BJ (cell line): ENCODE measurements at regions of chr3 and their contacts with region 1.

Region 1: DNA sequence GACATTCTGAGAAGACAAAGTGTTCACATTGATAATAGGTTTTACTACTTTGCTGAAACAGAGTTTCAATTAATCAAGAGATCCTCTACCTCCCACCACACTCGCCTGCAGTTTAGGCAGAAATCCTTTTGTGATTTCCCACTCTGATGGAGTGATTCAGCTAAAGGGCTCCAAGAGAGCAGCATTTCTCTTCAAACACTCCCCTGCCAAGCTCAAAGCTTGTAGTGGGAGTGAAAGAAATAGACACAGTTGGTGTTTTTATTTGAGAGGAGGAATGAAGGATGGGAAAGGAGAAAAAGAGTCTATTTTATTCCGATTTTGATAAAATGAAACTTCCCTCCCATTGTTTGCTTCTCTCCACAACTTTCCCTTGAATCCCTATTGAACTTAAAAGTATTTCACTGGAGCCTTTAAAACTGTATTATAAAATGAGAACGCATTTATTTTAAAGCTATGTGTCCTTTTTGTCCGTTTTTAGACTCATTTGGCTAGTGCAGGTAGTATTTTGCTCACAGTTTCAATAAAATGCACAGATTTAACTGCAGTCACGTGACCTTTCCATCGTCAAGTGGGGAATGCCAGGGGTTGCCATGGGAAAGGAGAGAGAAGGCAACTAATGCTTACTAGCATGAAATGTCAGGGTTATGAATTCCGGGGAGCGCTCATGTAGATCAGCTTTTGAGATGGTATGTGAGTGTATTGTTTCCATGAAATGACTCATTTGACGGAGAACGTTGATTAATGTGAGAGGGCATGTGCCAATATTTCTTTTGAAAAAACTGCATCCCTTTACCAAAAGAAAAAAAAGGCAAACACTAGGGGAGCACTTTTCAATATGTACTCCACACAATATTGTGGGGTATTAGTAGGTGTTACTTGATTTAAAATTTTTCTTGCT is 7.7 kb upstream of the OSBPL11 start:
- DNase-seq: no peak
- H3K4me3 ChIP-seq: no peak overlapping the region
- H3K27me3 ChIP-seq: no peaks in the 10 kb centered on the region
- CTCF ChIP-seq: no peak

Region 2: DNA sequence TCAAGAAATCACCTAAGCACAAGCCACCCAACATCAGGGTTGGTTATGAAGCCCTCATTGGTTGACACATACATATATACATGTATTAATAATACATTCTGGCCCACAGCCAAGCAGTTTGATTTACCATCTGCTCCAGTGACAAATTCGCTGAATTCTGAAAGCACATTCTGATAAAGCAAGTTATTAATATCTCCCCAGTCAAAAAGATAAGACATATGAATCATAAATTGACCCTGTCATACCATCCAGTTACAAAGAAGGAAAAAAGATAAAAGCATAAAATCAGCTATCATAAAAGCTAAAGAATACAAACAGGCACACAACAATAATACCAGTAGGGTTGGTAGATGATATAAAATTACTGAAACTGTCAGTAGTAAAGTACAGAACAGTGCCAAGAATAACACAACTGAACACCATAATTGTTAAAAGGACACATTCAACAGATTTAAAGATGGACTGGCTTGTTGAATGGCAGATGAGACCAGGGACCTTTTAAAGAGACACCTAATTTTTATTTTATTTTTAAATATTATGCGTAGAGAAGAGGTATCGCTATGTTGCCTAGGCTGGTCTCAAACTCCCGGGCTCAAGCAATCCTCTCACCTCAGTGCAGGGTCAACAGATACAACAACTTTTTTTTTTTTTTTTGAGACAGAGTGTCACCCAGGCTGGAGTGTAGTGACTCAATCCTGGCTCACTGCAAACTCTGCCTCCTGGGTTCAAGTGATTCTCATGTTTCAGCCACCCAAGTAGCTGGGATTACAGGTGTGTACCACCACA is 90.7 kb before region 1 on chr3:
- CTCF ChIA-PET with region 1: no interaction called
- POLR2A ChIA-PET with region 1: interaction called, 11 read pairs
- DNase-seq: no peak
- H3K4me3 ChIP-seq: no peak overlapping the region
- H3K27me3 ChIP-seq: no peaks in the 10 kb centered on the region
- CTCF ChIP-seq: no peak